ENCODE measurements at regions of chr15 and their contacts with region 1.

Region 1: DNA sequence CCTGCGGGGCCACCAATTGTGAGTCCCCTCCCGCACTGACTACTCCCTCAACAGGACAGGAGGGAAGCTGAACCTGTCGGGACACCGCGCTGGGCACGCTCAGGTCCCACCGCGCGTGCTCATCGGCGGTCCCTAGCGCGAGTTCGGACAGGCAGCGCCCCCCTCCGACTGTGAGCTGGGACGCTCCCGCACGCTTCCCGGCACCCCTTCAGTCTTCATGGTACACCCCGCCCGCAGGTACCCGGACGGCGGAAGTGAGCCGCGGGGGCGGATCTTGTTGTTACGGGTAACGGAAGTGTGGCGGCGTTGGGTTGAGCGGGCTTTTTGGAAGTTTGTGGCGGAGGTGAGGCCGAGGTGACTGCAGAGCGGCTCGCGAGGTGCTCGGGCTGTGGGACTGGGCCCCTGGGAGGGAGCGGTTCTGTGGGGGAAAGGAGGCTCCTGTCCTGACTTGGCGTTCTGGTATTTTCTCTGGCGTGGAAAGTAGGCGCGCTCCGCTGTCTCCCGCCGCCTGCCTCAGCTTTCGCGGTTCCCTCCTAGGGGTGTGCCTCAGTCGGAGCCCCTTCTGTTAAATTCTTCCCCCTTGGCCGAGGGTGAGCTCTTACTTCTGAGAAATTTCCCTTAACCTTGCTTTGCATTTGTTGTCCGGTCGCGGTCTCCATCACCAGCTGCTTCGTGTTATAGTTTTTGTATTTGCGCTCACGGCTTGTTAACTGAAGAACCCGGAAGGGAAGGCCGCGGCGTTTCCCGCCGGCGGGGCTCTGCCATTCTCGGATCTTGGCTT is at the start of gene FANCI:
- DNase-seq: peak; percentile 97
- H3K4me3 ChIP-seq: peak within 1 kb of the TSS; percentile 58 to 67
- H3K27ac ChIP-seq: peak within 1 kb of the TSS; percentile 63 to 71
- H3K4me1 ChIP-seq: no peaks in the 10 kb centered on the region
- H3K27me3 ChIP-seq: no peaks in the 10 kb centered on the region
- CTCF ChIP-seq: peak; percentile 30 to 77 (median 67)
- POLR2A ChIP-seq: peak; percentile 37
- total RNA-seq, gene FANCI: 7.8 to 22.7 TPM

Region 2: GRCh38 chr15:89206908-89207331 is 37.0 kb before region 1 on chr15:
- intact Hi-C with region 1: loop called (anchors 5 kb)
- DNase-seq: peak; percentile 73
- H3K4me3 ChIP-seq: no peak overlapping the region
- H3K27ac ChIP-seq: no peak overlapping the region
- H3K4me1 ChIP-seq: peaks cover 8% of the 10 kb centered on the region
- H3K27me3 ChIP-seq: no peaks in the 10 kb centered on the region
- CTCF ChIP-seq: peak; percentile 91 to 97 (median 92)
- POLR2A ChIP-seq: no peak

Region 3: GRCh38 chr15:89334510-89335288 is 90.8 kb after region 1 on chr15 and contains the start of gene POLG:
- intact Hi-C with region 1: loop called (anchors 10 kb)
- DNase-seq: peak; percentile 98
- H3K4me3 ChIP-seq: peak within 1 kb of the TSS; percentile 78 to 83
- H3K27ac ChIP-seq: peak within 1 kb of the TSS; percentile 92 to 93
- H3K4me1 ChIP-seq: peaks cover 10% of the 10 kb centered on the region
- H3K27me3 ChIP-seq: no peaks in the 10 kb centered on the region
- CTCF ChIP-seq: peak in 2 of 4 experiments; percentile 17 to 38
- POLR2A ChIP-seq: peak; percentile 96
- total RNA-seq, gene POLG: 54.3 to 92.0 TPM